ENCODE measurements at regions of chr5 and their contacts with region 1.

Region 1: DNA sequence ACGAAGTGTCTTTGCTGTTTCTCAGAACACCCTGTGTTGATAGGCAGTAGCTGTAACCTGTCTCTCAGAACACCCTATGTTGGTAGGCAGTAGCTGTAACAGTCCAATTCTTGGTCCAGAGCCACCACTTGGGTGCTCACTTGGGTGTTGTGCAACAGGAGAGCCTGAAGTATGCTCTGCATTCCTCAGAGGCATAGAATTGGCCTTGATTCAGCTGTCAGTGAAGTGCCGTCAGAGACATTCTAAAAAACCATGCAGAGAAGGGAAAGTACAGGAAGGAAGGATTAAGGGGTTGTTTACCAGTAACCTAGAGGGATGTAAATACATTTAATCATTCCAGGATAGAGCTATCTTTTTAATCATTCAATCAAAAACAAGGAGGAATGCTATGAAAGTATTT is 231.2 kb downstream of the ARRDC3 start:
- DNase-seq: peak in 1 of 2 donors; percentile 74
- ATAC-seq: peak; percentile 83
- H3K4me3 ChIP-seq: no peak overlapping the region
- H3K27ac ChIP-seq: no peak overlapping the region
- H3K4me1 ChIP-seq: no peaks in the 10 kb centered on the region
- H3K27me3 ChIP-seq: no peaks in the 10 kb centered on the region

Region 2: GRCh38 chr5:91110686-91111085 is 41.3 kb before region 1 on chr5:
- intact Hi-C with region 1: loop called in 1 of 2 experiments (anchors 5 kb)
- DNase-seq: no peak
- ATAC-seq: no peak
- H3K4me3 ChIP-seq: no peak overlapping the region
- H3K27ac ChIP-seq: no peak overlapping the region
- H3K4me1 ChIP-seq: peaks cover 0 to 2% of the 10 kb centered on the region in 2 donors
- H3K27me3 ChIP-seq: no peaks in the 10 kb centered on the region

Region 3: DNA sequence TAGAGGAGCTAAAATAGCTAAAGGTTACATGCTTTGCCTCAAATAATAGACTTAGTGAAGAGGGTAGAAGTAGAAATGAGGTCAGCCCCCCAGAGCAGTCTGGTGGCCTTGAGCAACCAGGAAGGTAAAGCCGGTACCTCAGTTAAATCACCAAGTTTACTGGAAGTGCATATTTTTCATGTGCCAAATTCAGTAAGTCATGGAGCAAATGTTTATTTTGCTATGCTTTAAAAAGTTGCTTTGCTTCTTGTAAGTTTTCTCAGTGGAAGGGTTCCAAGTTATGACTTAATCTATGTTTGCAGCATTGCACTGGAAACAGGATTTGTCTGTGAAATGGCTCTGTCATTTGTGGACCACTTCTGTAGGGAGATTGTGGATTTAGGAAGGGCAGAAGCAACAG is 25.5 kb before region 1 on chr5:
- intact Hi-C with region 1: loop called in 1 of 2 experiments (anchors 2 kb)
- DNase-seq: peak in 1 of 2 donors; percentile 53
- ATAC-seq: peak; percentile 68
- H3K4me3 ChIP-seq: no peak overlapping the region
- H3K27ac ChIP-seq: peak overlapping the region; percentile 43 to 95
- H3K4me1 ChIP-seq: peaks cover 8 to 15% of the 10 kb centered on the region in 2 donors
- H3K27me3 ChIP-seq: no peaks in the 10 kb centered on the region

Region 4: GRCh38 chr5:91269198-91269597 is 117.3 kb after region 1 on chr5:
- intact Hi-C with region 1: no loop called
- DNase-seq: no peak
- ATAC-seq: no peak
- H3K4me3 ChIP-seq: no peak overlapping the region
- H3K27ac ChIP-seq: no peak overlapping the region
- H3K4me1 ChIP-seq: peaks cover 0 to 3% of the 10 kb centered on the region in 2 donors
- H3K27me3 ChIP-seq: no peaks in the 10 kb centered on the region

Region 5: GRCh38 chr5:91280362-91281269 is 128.7 kb after region 1 on chr5:
- intact Hi-C with region 1: loop called in 1 of 2 experiments (anchors 5 kb)
- DNase-seq: peak; percentile 97 to 99
- ATAC-seq: peak; percentile 99
- H3K4me3 ChIP-seq: peak overlapping the region; percentile 37 to 76
- H3K27ac ChIP-seq: peak overlapping the region; percentile 23 to 97
- H3K4me1 ChIP-seq: no peaks in the 10 kb centered on the region
- H3K27me3 ChIP-seq: no peaks in the 10 kb centered on the region

Measured in aorta (tissue), 5 donors.